Left ventricle myocardium inferior (tissue), 1 donor: ENCODE measurements at regions of chr3 and their contacts with region 1.

Region 1: DNA sequence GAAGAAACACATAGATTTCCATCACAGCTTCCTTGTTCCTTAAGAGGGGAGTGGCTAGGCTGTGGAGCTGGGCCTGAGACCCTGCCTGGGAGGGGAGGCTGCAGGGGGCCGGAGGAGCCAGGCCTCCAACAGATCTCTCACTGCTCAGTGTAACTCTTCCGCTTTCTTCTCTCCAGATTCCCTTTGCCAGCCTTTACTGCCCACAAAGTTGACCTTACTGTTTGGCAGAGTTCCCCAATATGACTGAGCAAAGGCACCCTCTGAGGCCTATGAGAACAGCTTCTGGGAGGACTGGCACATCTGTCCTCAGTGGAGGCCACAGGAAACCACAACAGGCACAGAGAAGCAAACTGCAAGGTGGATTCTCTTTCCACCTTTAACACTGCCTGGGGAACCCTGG is 38.1 kb downstream of the SLCO2A1 start:
- DNase-seq: no peak
- H3K4me3 ChIP-seq: no peak overlapping the region
- H3K27ac ChIP-seq: peak overlapping the region; percentile 70
- H3K4me1 ChIP-seq: peaks cover 46% of the 10 kb centered on the region
- H3K27me3 ChIP-seq: peaks cover 16% of the 10 kb centered on the region
- CTCF ChIP-seq: no peak

Region 2: DNA sequence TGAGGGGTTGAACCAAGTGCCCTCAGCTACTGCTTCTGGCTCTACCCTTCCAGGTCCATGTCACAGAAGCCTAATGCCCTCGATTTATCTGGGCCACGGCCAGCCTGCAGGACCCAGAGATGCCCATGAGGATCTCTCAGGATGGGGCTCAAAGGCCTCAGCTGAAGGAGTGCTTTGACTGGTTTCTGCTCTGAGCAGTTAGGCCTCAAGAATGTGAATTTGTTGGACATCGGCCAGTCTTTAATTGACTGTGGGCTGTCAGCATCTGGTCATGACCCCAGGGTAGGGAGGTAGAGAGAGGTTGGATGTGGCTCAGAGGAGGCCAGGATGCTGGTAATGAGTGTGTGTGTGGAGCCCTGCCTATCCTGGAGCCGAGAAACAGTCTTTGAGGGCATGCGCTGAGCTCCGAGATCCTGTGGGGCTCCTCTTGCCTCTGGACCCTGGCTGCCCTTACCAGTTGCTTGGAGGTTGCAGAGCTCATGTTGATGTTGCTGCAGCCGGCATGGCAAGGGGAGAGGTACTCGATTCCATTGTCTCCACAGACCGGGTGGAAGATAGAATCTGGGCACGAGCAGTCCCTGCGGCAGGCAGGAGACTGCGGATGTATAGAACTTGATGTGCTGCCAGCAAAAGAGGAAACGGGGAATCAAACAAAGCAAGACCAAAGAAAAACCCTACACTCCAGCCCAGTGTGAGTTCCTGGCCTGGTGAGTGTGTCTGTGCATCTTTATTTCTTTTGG is 46.8 kb before region 1 on chr3:
- intact Hi-C with region 1: loop called (anchors 5 kb)
- DNase-seq: peak; percentile 25
- H3K4me3 ChIP-seq: no peak overlapping the region
- H3K27ac ChIP-seq: peak overlapping the region; percentile 84
- H3K4me1 ChIP-seq: peaks cover 67% of the 10 kb centered on the region
- H3K27me3 ChIP-seq: no peaks in the 10 kb centered on the region
- CTCF ChIP-seq: no peak